ENCODE measurements at regions of chr5 and their contacts with region 1.

Region 1: GRCh38 chr5:133111299-133111698 is 59.5 kb downstream of the HSPA4 start:
- DNase-seq: peak; percentile 92
- H3K4me3 Mint-ChIP-seq: no peak overlapping the region
- H3K27ac Mint-ChIP-seq: no peak overlapping the region
- H3K4me1 Mint-ChIP-seq: peaks cover 24% of the 10 kb centered on the region
- H3K27me3 Mint-ChIP-seq: no peaks in the 10 kb centered on the region
- CTCF ChIP-seq: peak; percentile 99

Region 2: GRCh38 chr5:132591145-132591544 is 520.2 kb before region 1 on chr5:
- CTCF ChIA-PET with region 1: no interaction called
- POLR2A ChIA-PET with region 1: no interaction called
- intact Hi-C with region 1: no loop called
- DNase-seq: no peak
- H3K4me3 Mint-ChIP-seq: no peak overlapping the region
- H3K27ac Mint-ChIP-seq: no peak overlapping the region
- H3K4me1 Mint-ChIP-seq: peaks cover 5% of the 10 kb centered on the region
- H3K27me3 Mint-ChIP-seq: no peaks in the 10 kb centered on the region
- CTCF ChIP-seq: no peak

Region 3: GRCh38 chr5:133032852-133033742 is 78.2 kb before region 1 on chr5:
- CTCF ChIA-PET with region 1: no interaction called
- POLR2A ChIA-PET with region 1: no interaction called
- intact Hi-C with region 1: no loop called
- DNase-seq: no peak
- H3K4me3 Mint-ChIP-seq: no peak overlapping the region
- H3K27ac Mint-ChIP-seq: no peak overlapping the region
- H3K4me1 Mint-ChIP-seq: no peaks in the 10 kb centered on the region
- H3K27me3 Mint-ChIP-seq: no peaks in the 10 kb centered on the region
- CTCF ChIP-seq: no peak

Region 4: DNA sequence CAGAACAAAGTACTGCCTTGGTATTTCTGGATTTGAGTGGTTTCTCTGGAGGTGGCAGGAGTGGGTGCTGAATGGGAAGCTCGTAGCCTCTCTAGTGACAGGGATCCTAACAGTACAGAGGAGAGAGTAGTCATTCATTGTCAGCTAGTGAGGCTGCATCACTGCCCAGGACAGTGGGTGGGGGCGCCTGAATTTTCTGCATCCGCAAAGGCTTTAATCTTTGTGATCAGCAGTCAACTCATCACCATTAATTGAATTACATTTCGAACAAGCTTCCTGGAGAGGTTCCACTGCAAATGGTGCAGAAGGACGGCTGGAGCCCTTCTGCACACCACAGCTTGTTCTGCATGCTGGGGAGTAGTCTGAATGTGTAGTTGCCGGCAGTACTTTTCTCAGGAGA is 18.0 kb after region 1 on chr5:
- CTCF ChIA-PET with region 1: interaction called, 13 read pairs
- POLR2A ChIA-PET with region 1: interaction called, 7 read pairs
- intact Hi-C with region 1: no loop called
- DNase-seq: no peak
- H3K4me3 Mint-ChIP-seq: no peak overlapping the region
- H3K27ac Mint-ChIP-seq: no peak overlapping the region
- H3K4me1 Mint-ChIP-seq: no peaks in the 10 kb centered on the region
- H3K27me3 Mint-ChIP-seq: no peaks in the 10 kb centered on the region
- CTCF ChIP-seq: no peak

Region 5: DNA sequence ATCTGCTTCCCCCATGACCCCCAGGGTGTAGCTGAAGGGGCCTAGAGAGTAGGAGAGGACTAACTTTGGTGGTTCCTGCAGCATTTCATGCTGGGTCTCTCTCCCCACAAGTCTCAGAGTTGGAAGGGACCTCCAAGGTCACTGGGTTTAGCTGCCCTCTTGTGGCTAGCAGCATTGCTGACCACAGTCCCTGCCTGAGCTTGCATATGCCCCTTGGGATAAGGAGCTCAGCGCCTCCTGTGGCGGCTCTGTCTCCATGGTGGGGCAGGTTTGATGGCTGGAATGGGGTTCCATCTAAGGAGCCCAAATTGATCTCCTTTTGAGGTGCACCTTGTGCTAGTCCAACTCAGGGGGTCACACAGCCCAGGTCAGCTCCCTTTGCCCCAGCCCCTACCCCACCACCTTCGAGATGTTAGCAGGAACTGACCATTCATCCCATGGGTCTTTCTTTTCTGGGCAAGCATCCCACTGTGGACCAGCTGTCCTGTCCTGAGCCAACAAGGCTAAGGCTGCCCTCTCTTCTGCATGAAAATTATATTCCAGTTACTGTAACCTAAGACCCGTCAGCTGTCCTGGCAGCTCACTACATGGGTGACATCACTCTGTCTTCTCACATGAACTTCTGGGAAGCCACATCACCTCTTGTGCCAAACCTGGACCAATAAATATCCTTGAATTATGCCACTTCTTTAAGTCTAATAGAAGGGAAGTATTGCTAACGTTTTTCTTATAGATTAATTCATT is 136.8 kb after region 1 on chr5:
- CTCF ChIA-PET with region 1: interaction called, 28 read pairs
- POLR2A ChIA-PET with region 1: interaction called, 13 read pairs
- intact Hi-C with region 1: loop called (anchors 1 kb)
- DNase-seq: peak; percentile 75
- H3K4me3 Mint-ChIP-seq: no peak overlapping the region
- H3K27ac Mint-ChIP-seq: no peak overlapping the region
- H3K4me1 Mint-ChIP-seq: peaks cover 23% of the 10 kb centered on the region
- H3K27me3 Mint-ChIP-seq: no peaks in the 10 kb centered on the region
- CTCF ChIP-seq: peak; percentile 57

Region 6: DNA sequence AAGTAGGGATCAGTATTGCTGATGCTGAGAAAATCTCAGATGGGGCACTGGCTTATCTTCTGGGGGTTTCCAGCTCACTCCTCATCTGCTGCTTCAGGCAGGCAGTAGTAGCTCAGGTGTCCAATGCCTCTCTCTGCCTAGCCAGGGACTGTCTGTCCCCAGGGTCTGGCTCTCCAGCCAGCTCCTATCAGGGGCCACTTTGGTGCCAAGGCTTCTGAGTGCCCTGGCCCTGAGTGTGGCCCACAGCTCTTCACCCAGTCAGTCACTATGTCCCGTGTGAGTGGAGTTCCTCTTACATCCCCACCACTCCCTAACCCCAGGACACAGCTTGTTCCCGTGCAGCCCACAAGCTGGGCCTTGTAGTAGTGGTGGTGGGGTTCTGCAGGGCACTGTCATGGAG is 192.0 kb after region 1 on chr5:
- CTCF ChIA-PET with region 1: interaction called, 11 read pairs
- POLR2A ChIA-PET with region 1: interaction called, 3 read pairs
- intact Hi-C with region 1: no loop called
- DNase-seq: no peak
- H3K4me3 Mint-ChIP-seq: no peak overlapping the region
- H3K27ac Mint-ChIP-seq: no peak overlapping the region
- H3K4me1 Mint-ChIP-seq: no peaks in the 10 kb centered on the region
- H3K27me3 Mint-ChIP-seq: peaks cover 27% of the 10 kb centered on the region
- CTCF ChIP-seq: no peak

Region 7: DNA sequence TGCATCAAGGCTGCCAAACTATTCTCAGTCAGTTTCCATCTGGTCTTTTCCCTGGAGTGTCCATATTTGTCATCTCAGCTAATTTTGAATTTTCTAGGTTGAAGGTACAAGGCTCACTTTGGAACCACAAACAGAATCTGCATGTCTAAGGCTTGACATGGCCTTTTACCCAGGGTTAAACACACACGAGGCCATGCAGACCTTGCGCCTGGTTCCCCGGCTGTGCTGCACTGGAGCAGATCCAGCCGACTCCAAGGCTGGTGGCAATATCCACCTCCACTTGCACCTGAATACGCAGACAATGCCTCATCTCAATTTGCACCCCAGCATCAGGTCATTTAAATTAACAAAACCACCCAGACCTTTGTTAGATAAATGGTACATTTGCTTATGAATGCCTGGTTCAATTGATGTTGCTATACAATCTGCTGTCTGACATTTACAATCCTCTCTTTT is 216.7 kb after region 1 on chr5:
- CTCF ChIA-PET with region 1: interaction called, 82 read pairs
- POLR2A ChIA-PET with region 1: interaction called, 3 read pairs
- intact Hi-C with region 1: no loop called
- DNase-seq: no peak
- H3K4me3 Mint-ChIP-seq: no peak overlapping the region
- H3K27ac Mint-ChIP-seq: no peak overlapping the region
- H3K4me1 Mint-ChIP-seq: no peaks in the 10 kb centered on the region
- H3K27me3 Mint-ChIP-seq: no peaks in the 10 kb centered on the region
- CTCF ChIP-seq: no peak

Region 8: DNA sequence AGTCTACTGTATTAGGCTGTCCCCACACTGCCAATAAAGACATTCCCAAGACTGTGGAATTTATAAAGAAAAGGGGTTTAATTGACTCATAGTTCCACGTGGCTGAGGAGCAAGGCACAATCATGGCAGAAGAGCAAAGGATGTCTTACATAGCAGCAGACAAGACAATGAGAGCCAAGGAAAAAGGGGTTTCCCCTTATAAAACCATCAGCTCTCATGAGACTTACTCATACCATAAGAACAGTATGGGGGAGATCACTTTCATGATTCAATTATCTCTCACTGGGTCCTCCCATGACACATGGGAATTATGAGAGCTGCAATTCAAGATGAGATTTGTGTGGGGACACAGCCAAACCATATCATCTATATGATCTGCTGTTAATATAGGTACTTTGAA is 515.9 kb after region 1 on chr5:
- CTCF ChIA-PET with region 1: no interaction called
- POLR2A ChIA-PET with region 1: no interaction called
- intact Hi-C with region 1: no loop called
- DNase-seq: no peak
- H3K4me3 Mint-ChIP-seq: no peak overlapping the region
- H3K27ac Mint-ChIP-seq: no peak overlapping the region
- H3K4me1 Mint-ChIP-seq: no peaks in the 10 kb centered on the region
- H3K27me3 Mint-ChIP-seq: peaks cover 85% of the 10 kb centered on the region
- CTCF ChIP-seq: no peak

Region 9: DNA sequence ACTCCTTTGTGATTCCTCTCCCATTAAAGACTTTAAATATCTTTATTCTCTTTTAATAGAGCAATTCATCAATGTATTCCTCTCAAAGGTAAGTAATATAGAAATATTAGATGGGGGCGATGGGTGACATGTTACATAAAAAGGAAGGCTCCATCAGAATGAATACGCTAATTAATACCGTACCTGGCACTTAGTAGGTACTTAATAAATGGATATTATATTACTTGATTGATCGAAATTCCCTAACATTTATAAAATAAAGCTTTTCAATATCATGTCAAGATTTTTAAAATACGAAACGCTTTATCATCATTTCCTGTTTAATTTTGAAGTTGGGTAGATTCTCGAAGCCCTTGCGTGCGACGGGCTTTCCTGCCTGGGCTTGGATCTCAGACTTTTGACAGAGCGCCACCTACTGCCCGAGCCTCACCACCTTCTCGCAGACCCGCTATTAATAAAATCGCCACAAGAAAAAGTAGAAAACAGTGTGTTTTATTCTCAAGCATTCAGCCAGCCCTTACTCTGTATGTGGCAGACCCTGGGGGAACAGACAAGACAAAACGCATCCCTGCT is 757.7 kb after region 1 on chr5:
- CTCF ChIA-PET with region 1: interaction called, 48 read pairs
- POLR2A ChIA-PET with region 1: interaction called, 3 read pairs
- intact Hi-C with region 1: loop called (anchors 1 kb)
- DNase-seq: peak; percentile 80
- H3K4me3 Mint-ChIP-seq: no peak overlapping the region
- H3K27ac Mint-ChIP-seq: no peak overlapping the region
- H3K4me1 Mint-ChIP-seq: no peaks in the 10 kb centered on the region
- H3K27me3 Mint-ChIP-seq: peaks cover 70% of the 10 kb centered on the region
- CTCF ChIP-seq: peak; percentile 86